CD4-positive, alpha-beta memory T cell (primary cell): ENCODE measurements at regions of chr11 and their contacts with region 1.

Region 1: GRCh38 chr11:250740-251299 is 14.0 kb downstream of the PSMD13 start:
- DNase-seq: peak; percentile 75 to 84 (median 81)
- H3K4me3 ChIP-seq: no peak overlapping the region
- H3K4me3 Mint-ChIP-seq: no peak overlapping the region
- H3K27ac ChIP-seq: peak overlapping the region; percentile 8
- H3K27ac Mint-ChIP-seq: peak overlapping the region; percentile 71 to 91 (median 81)
- H3K4me1 ChIP-seq: peaks cover 5% of the 10 kb centered on the region
- H3K4me1 Mint-ChIP-seq: peaks cover 6 to 9% (median 7%) of the 10 kb centered on the region in 4 donors
- H3K27me3 ChIP-seq: no peaks in the 10 kb centered on the region
- H3K27me3 Mint-ChIP-seq: no peaks in the 10 kb centered on the region

Region 2: DNA sequence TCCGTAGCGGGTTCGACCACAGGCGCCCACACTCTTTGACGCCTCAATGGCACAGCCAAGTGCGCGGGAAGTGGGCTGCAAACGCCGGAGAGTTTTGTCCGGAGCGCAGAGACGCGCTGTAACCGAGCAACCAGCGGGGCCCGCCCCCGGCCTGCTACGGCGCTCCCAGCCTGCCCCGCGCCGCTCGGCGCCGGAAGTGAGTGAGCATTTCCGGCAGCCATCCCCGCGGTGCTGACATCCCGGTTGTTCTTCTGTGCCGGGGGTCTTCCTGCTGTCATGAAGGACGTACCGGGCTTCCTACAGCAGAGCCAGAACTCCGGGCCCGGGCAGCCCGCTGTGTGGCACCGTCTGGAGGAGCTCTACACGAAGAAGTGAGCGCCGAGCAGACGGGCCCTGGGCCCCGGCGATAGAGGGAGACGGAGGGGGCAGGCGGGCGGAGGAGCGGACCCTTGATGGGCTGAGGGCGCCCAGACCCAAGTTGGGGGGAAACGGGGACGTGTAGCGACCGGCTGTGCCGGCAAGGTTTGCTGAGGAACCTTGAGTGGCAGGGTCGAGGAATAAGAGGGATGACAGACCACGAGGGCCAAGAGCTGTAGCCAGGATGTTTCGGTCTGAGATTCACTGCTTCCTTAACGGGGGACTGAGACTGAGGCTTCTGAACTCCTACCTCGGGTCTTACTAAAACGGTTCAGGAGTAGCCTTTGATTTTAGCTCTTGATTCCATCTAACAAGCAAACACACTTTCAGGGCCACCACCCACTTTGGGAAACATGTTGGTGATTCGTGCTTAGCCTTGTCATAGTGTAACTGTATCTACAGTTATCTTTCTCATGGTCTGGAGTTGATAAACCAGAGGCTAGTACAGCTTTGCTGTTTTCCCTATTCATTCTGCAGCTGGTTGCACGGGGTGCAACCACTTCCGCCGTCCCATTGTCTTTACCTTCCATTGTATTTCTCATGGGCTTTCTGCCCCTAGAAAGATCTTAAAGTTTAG is 13.7 kb before region 1 on chr11 and contains the start of gene PSMD13:
- CTCF ChIA-PET with region 1: interaction called, 20 read pairs
- POLR2A ChIA-PET with region 1: interaction called, 13 read pairs
- intact Hi-C with region 1: no loop called
- DNase-seq: peak; percentile 85 to 90 (median 88)
- H3K4me3 ChIP-seq: peak within 1 kb of the TSS; percentile 96 to 100
- H3K4me3 Mint-ChIP-seq: peak within 1 kb of the TSS; percentile 98 to 100 (median 99)
- H3K27ac ChIP-seq: peak within 1 kb of the TSS; percentile 100
- H3K27ac Mint-ChIP-seq: peak within 1 kb of the TSS; percentile 97 to 100 (median 100)
- H3K4me1 ChIP-seq: peaks cover 22% of the 10 kb centered on the region
- H3K4me1 Mint-ChIP-seq: peaks cover 31 to 64% (median 46%) of the 10 kb centered on the region in 4 donors
- H3K27me3 ChIP-seq: no peaks in the 10 kb centered on the region
- H3K27me3 Mint-ChIP-seq: no peaks in the 10 kb centered on the region
- total RNA-seq, gene PSMD13: 99.9 to 107 TPM

Region 3: DNA sequence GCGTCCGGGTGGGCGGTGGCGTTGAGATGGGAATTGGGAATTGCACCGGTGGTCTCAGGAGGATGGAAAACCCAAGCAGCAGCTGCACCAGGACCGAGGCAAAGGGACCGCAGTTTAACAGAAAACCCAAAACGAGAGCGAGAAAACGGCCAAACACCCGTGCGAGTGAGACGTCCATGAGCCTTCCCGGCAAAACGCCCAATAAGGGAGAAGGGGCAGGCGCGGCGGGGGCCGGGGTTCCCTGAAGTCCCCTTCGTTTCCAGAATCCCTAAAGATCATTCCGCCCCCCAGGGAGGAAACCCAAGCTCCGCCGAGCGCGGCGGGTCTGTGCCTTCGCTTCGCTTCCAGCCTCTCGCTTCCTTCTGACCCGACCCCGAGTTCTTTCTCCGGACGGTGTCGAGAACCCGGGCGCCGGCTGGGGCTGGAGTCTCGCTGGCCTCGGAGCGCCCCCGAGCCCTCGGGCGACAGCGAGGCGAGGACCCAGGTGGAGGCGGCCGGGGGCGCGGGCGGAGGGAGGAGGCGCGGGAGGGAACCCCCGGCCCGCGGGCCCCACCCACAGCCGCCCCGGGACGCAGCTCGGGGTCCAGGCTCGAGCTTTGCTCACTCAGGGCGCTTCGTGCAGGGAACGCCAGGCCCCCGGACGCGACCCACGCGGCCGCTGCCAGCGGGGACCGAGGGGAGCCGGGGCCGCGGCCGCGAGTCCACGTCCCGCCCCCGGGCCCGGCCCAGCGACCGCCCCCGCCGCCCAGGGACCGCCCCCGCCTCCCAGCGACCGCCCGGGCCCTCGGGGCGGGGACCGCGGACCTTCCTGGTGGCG is 37.7 kb after region 1 on chr11 and contains the start of gene PGGHG:
- CTCF ChIA-PET with region 1: interaction called, 81 read pairs
- POLR2A ChIA-PET with region 1: interaction called, 45 read pairs
- intact Hi-C with region 1: no loop called
- DNase-seq: peak in 3 of 5 donors; percentile 49 to 60 (median 51)
- H3K4me3 ChIP-seq: peak within 1 kb of the TSS; percentile 83 to 95
- H3K4me3 Mint-ChIP-seq: peak within 1 kb of the TSS; percentile 88 to 99 (median 98)
- H3K27ac ChIP-seq: peak within 1 kb of the TSS; percentile 96
- H3K27ac Mint-ChIP-seq: peak within 1 kb of the TSS; percentile 95 to 100 (median 98)
- H3K4me1 ChIP-seq: peaks cover 38% of the 10 kb centered on the region
- H3K4me1 Mint-ChIP-seq: peaks cover 14 to 51% (median 31%) of the 10 kb centered on the region in 4 donors
- H3K27me3 ChIP-seq: no peaks in the 10 kb centered on the region
- H3K27me3 Mint-ChIP-seq: no peaks in the 10 kb centered on the region
- total RNA-seq, gene PGGHG: 304 TPM

Region 4: GRCh38 chr11:313787-314547 is 63.1 kb after region 1 on chr11 and contains the start of gene IFITM1:
- CTCF ChIA-PET with region 1: interaction called, 23 read pairs
- POLR2A ChIA-PET with region 1: interaction called, 8 read pairs
- intact Hi-C with region 1: loop called (anchors 2 kb)
- DNase-seq: peak; percentile 72 to 85 (median 79)
- H3K4me3 ChIP-seq: peak within 1 kb of the TSS; percentile 59 to 91
- H3K4me3 Mint-ChIP-seq: peak within 1 kb of the TSS; percentile 92 to 99 (median 98)
- H3K27ac ChIP-seq: peak within 1 kb of the TSS; percentile 76
- H3K27ac Mint-ChIP-seq: peak within 1 kb of the TSS; percentile 94 to 100 (median 98)
- H3K4me1 ChIP-seq: peaks cover 37% of the 10 kb centered on the region
- H3K4me1 Mint-ChIP-seq: peaks cover 29 to 56% (median 35%) of the 10 kb centered on the region in 4 donors
- H3K27me3 ChIP-seq: no peaks in the 10 kb centered on the region
- H3K27me3 Mint-ChIP-seq: no peaks in the 10 kb centered on the region
- total RNA-seq, gene IFITM1: 119 to 121 TPM

Region 5: GRCh38 chr11:363948-364761 is 113.3 kb after region 1 on chr11:
- CTCF ChIA-PET with region 1: interaction called, 28 read pairs
- POLR2A ChIA-PET with region 1: interaction called, 4 read pairs
- intact Hi-C with region 1: no loop called
- DNase-seq: peak; percentile 61 to 76 (median 72)
- H3K4me3 ChIP-seq: no peak overlapping the region
- H3K4me3 Mint-ChIP-seq: peak overlapping the region in 2 of 8 donors; percentile 12 to 51
- H3K27ac ChIP-seq: no peak overlapping the region
- H3K27ac Mint-ChIP-seq: peak overlapping the region in 2 of 7 donors; percentile 7 to 63
- H3K4me1 ChIP-seq: peaks cover 17% of the 10 kb centered on the region
- H3K4me1 Mint-ChIP-seq: peaks cover 7 to 22% (median 19%) of the 10 kb centered on the region in 4 donors
- H3K27me3 ChIP-seq: peaks cover 22% of the 10 kb centered on the region
- H3K27me3 Mint-ChIP-seq: peaks cover 18 to 20% of the 10 kb centered on the region in 2 donors

Region 6: GRCh38 chr11:518463-519250 is 267.8 kb after region 1 on chr11:
- CTCF ChIA-PET with region 1: interaction called, 11 read pairs
- POLR2A ChIA-PET with region 1: no interaction called
- intact Hi-C with region 1: no loop called
- DNase-seq: peak; percentile 82 to 91 (median 84)
- H3K4me3 ChIP-seq: peak overlapping the region in 1 of 2 donors; percentile 30
- H3K4me3 Mint-ChIP-seq: peak overlapping the region; percentile 20 to 91 (median 84)
- H3K27ac ChIP-seq: no peak overlapping the region
- H3K27ac Mint-ChIP-seq: peak overlapping the region; percentile 80 to 92 (median 88)
- H3K4me1 ChIP-seq: peaks cover 4% of the 10 kb centered on the region
- H3K4me1 Mint-ChIP-seq: peaks cover 2 to 12% (median 3%) of the 10 kb centered on the region in 4 donors
- H3K27me3 ChIP-seq: no peaks in the 10 kb centered on the region
- H3K27me3 Mint-ChIP-seq: no peaks in the 10 kb centered on the region